Head of caudate nucleus (tissue), 42 donors: ENCODE measurements at regions of chr16 and their contacts with region 1.

Region 1: DNA sequence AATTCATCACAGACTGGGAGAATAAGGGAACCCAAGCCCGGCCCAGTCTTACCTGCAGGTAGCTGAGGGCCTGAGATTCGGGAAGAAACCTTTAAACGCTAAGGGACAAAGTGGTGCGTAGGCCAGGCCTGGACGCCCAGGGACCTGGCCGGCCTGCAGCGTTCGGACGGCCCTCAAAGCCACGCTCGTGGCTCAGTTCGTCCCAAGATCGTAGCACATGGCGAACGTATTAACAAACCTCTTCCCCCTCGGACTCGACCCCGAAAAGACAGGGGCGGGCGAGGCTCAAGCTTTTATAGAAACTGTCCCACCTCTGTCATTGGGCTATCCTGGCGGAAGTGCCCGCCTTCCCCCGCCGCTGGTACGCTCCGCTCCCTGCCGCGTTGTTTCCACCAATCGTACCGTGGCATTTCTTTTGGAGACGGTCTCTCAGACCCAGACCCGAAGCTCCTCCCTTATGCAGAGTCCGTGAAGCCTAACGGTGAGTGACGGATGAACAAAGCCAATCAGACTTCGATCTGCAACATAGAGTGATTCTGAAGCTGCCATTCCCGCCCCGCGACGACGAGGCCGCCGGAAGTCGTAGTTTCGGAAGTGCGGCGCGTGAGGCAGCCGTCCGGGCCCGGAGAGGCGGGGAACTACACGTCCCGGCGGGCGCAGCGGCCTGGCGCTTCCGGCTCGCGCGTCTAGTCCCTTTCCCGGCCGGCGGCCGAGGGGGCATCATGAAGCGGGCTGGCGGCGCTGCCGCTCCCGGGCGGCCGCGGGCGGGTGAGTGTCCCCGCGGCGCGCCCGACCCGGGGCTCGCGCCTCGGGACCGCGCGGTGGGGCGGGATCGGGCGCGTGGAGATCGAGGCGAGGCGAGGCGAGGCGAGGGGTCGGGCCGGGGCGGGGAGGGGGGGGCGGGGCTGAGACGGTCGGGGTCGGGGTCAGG is at the start of gene TRAF7:
- DNase-seq: peak; percentile 96 to 100 (median 99)

Region 2: GRCh38 chr16:2023098-2023925 is 132.0 kb before region 1 on chr16:
- intact Hi-C with region 1: loop called (anchors 5 kb)
- DNase-seq: peak; percentile 86 to 99 (median 95)